CD4-positive, alpha-beta memory T cell (primary cell): ENCODE measurements at regions of chr6 and their contacts with region 1.

Region 1: DNA sequence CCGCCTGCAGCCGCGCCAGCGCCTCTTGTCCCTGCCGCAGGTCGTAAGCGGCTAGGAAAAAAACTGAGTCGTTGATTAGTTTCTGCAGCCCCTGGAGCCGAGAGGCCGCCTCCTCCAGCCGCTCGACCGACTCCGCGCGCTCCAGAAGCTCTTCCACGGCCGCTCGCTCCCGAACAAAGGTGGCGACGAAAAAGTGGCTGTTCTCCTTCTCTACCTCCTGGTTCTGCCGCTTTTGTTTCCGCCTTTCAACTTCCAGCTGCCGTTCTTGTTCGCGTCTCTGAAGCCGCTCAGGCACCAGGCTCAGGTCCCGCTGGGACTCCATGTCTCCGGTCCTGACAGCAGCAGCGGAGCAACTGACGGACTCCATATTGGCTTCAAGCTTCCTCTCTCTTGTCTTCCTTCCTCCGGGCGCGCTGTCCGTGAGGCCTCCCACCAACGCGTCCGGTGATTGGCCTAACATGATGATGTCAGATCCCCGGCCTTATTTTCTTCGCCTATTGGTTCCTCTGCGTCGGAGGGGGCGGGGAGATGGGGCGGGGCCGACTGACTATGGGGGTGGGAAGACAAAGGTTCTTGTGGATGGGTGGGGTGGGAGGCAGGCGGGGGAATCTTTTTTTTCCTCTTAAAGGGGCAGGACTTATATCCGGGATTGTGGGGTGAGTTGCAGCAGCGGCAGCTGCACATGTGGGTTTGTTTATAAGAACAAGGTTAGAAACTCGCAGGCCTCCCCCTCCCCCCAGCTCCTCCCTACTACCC is at the start of gene TBCC:
- DNase-seq: peak; percentile 91 to 98 (median 94)
- H3K4me3 ChIP-seq: peak within 1 kb of the TSS; percentile 82 to 99
- H3K4me3 Mint-ChIP-seq: peak within 1 kb of the TSS; percentile 100
- H3K27ac ChIP-seq: peak within 1 kb of the TSS; percentile 88
- H3K27ac Mint-ChIP-seq: peak within 1 kb of the TSS; percentile 94 to 100 (median 100)
- H3K4me1 ChIP-seq: peaks cover 38% of the 10 kb centered on the region
- H3K4me1 Mint-ChIP-seq: peaks cover 18 to 50% (median 37%) of the 10 kb centered on the region in 4 donors
- H3K27me3 ChIP-seq: no peaks in the 10 kb centered on the region
- H3K27me3 Mint-ChIP-seq: no peaks in the 10 kb centered on the region
- total RNA-seq, gene TBCC: 57.4 to 64.4 TPM

Region 2: GRCh38 chr6:42453031-42453653 is 292.7 kb before region 1 on chr6:
- CTCF ChIA-PET with region 1: no interaction called
- POLR2A ChIA-PET with region 1: no interaction called
- intact Hi-C with region 1: no loop called
- DNase-seq: peak; percentile 75 to 82 (median 77)
- H3K4me3 ChIP-seq: peak overlapping the region; percentile 68 to 72
- H3K4me3 Mint-ChIP-seq: peak overlapping the region; percentile 93 to 100 (median 96)
- H3K27ac ChIP-seq: peak overlapping the region; percentile 36
- H3K27ac Mint-ChIP-seq: peak overlapping the region in 3 of 7 donors; percentile 10 to 80 (median 75)
- H3K4me1 ChIP-seq: peaks cover 31% of the 10 kb centered on the region
- H3K4me1 Mint-ChIP-seq: peaks cover 25 to 53% (median 29%) of the 10 kb centered on the region in 4 donors
- H3K27me3 ChIP-seq: no peaks in the 10 kb centered on the region
- H3K27me3 Mint-ChIP-seq: no peaks in the 10 kb centered on the region

Region 3: DNA sequence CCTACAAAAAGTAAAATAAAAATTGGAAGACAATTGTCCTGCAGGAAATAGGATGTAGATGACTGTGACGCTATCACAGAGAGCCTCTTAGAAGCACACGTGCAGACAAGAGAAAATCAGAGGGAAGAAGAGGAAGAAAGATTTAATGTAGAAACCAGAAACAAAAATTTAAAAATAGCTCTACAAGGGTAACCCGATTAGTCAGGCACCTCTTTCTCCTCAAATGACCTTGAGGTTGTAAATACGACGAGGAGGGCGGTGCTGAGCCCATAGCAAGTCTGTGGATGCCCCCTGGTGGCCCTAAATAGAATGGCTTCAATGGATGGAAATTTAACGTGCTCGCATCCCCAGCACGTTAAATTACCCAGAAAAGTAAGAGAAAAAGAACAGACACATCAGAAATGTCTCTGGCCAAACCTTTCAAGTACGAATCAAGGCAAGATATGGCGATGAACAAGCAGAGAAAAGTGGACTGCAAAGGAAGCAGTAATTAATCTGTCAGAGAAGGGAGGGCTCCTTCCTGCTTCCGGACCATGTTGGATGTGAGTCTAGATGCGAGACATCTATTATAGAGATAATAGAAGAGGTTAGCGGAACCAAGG is 19.3 kb before region 1 on chr6:
- CTCF ChIA-PET with region 1: interaction called, 30 read pairs
- POLR2A ChIA-PET with region 1: interaction called, 169 read pairs
- intact Hi-C with region 1: loop called (anchors 1 kb)
- DNase-seq: peak; percentile 79 to 89 (median 81)
- H3K4me3 ChIP-seq: peak overlapping the region; percentile 53 to 55
- H3K4me3 Mint-ChIP-seq: peak overlapping the region; percentile 83 to 98 (median 92)
- H3K27ac ChIP-seq: peak overlapping the region; percentile 69
- H3K27ac Mint-ChIP-seq: peak overlapping the region; percentile 86 to 99 (median 98)
- H3K4me1 ChIP-seq: peaks cover 16% of the 10 kb centered on the region
- H3K4me1 Mint-ChIP-seq: peaks cover 11 to 24% (median 18%) of the 10 kb centered on the region in 4 donors
- H3K27me3 ChIP-seq: no peaks in the 10 kb centered on the region
- H3K27me3 Mint-ChIP-seq: no peaks in the 10 kb centered on the region

Region 4: GRCh38 chr6:42791706-42792320 is 45.9 kb after region 1 on chr6:
- CTCF ChIA-PET with region 1: interaction called, 3 read pairs
- POLR2A ChIA-PET with region 1: interaction called, 1,692 read pairs
- intact Hi-C with region 1: no loop called
- DNase-seq: no peak
- H3K4me3 ChIP-seq: no peak overlapping the region
- H3K4me3 Mint-ChIP-seq: no peak overlapping the region
- H3K27ac ChIP-seq: no peak overlapping the region
- H3K27ac Mint-ChIP-seq: peak overlapping the region in 6 of 7 donors; percentile 30 to 80 (median 64)
- H3K4me1 ChIP-seq: peaks cover 52% of the 10 kb centered on the region
- H3K4me1 Mint-ChIP-seq: peaks cover 9 to 38% (median 35%) of the 10 kb centered on the region in 4 donors
- H3K27me3 ChIP-seq: no peaks in the 10 kb centered on the region
- H3K27me3 Mint-ChIP-seq: no peaks in the 10 kb centered on the region

Region 5: DNA sequence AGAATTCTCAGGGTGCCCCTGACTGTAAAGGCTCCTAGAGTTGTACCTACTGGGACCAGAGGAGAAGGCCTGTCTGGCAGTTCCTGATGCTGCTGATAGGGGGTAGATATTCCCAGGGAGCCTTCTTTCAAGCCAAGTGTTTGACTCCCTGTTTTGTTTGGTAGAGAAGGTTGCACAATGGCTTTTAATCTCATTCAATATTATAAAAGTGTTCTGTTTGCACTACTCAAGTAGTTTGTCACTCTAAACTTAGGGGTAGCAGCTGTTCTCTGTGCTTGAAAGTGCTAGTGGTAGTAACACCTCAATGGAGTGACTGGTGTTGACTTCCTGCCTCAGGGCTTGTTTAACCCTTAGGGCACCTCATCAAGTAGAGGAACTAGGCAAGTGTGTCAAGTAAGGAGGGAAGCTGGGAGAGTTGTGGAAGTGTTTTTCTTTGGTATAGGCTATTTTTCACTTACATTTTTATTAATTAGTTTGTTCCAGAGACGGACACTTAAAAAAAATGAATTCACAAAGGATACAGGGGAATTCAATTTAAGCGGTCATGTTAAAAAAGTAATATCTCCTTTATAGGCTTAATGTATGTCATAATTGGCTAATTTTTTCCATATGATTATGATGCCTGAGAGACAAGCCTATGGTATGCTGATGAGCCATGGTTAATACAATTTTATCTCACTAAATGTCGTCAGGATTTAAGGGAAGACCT is 74.1 kb after region 1 on chr6:
- CTCF ChIA-PET with region 1: no interaction called
- POLR2A ChIA-PET with region 1: interaction called, 33 read pairs
- intact Hi-C with region 1: no loop called
- DNase-seq: peak in 4 of 5 donors; percentile 17 to 24 (median 22)
- H3K4me3 ChIP-seq: no peak overlapping the region
- H3K4me3 Mint-ChIP-seq: peak overlapping the region in 2 of 8 donors; percentile 11 to 34
- H3K27ac ChIP-seq: no peak overlapping the region
- H3K27ac Mint-ChIP-seq: peak overlapping the region; percentile 35 to 79 (median 57)
- H3K4me1 ChIP-seq: peaks cover 15% of the 10 kb centered on the region
- H3K4me1 Mint-ChIP-seq: peaks cover 16 to 30% (median 25%) of the 10 kb centered on the region in 4 donors
- H3K27me3 ChIP-seq: no peaks in the 10 kb centered on the region
- H3K27me3 Mint-ChIP-seq: no peaks in the 10 kb centered on the region

Region 6: DNA sequence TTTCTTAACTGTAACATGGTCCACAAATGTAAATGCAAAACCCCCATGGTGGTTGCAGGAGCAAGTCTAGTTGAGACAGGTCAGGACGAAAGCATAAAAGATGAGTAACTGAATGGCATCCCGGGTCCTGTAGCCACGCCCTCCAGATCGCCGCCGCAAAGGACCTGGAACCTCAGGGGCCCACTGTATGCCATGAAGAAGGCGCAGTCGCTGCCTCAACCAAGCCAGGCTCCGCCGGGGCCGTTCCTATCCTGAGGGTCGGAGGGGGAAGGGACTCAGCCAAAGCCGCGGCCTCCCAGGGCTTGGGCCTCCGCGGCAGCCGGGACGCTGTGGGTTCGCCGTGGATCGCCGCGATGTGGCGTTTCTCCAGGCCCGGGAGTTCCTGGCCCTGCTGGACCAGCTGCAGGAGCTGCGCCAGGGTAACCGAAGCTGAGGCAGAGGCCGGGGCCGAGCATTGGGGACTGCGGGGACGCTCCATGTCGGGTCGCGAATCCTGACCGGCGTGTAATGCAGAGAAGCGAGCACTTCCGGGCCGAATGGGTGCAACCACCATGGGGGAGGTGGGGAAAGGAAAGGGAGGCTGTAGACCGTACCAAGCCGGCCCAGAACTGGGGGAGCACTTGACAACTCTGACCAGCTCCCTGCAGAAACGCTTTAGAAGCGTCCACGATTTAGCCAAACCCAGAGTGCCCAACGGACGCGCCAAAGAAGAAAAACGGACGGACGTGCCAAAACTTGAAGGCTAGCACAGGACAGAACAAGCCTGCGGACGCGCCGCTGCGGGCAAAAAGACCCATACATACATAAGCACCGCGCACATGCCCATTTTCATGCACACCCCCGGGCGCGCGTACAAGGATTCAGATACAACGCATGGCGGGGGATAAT is 144.7 kb after region 1 on chr6:
- CTCF ChIA-PET with region 1: no interaction called
- POLR2A ChIA-PET with region 1: interaction called, 37 read pairs
- intact Hi-C with region 1: loop called (anchors 5 kb)
- DNase-seq: peak; percentile 87 to 91 (median 89)
- H3K4me3 ChIP-seq: peak overlapping the region; percentile 59 to 97
- H3K4me3 Mint-ChIP-seq: peak overlapping the region; percentile 94 to 99 (median 98)
- H3K27ac ChIP-seq: peak overlapping the region; percentile 92
- H3K27ac Mint-ChIP-seq: peak overlapping the region; percentile 93 to 99 (median 97)
- H3K4me1 ChIP-seq: peaks cover 15% of the 10 kb centered on the region
- H3K4me1 Mint-ChIP-seq: peaks cover 9 to 21% (median 12%) of the 10 kb centered on the region in 4 donors
- H3K27me3 ChIP-seq: no peaks in the 10 kb centered on the region
- H3K27me3 Mint-ChIP-seq: no peaks in the 10 kb centered on the region